ENCODE measurements at regions of chr6 and their contacts with region 1.

Region 1: DNA sequence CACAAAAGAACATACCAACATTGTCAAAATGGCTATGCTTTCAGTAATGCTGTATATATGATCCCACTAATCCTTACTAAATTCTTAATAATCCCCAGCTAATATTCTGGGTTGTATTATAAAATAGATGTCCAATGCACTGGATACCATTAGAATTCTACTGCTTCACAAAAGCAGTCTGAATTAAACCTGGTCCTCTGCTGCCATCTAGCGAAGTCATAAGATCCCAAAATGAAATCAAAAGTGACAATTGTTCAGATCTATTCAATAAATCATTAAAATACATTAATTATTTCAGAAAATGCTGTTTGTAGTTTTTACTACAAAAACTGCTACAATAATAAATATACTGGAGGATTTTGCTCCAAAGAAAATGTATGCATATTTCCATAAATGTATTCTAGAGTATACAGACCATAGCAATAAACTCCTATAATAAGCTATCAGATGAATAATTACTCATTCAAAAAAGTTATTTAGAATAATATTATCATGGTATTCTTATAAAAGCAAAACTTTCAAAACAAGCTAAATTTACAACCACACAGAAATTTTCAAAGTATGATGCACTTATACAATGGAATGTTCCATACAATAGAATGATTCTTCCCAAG is 92.6 kb downstream of the RNGTT start:
- DNase-seq: peak; percentile 29
- H3K4me3 ChIP-seq: no peak overlapping the region
- H3K27ac ChIP-seq: no peak overlapping the region
- H3K27me3 ChIP-seq: no peaks in the 10 kb centered on the region
- CTCF ChIP-seq: peak; percentile 63

Region 2: GRCh38 chr6:87393022-87393622 is 1477.7 kb before region 1 on chr6:
- CTCF ChIA-PET with region 1: interaction called, 13 read pairs
- POLR2A ChIA-PET with region 1: no interaction called
- DNase-seq: no peak
- H3K4me3 ChIP-seq: no peak overlapping the region
- H3K27ac ChIP-seq: no peak overlapping the region
- H3K27me3 ChIP-seq: no peaks in the 10 kb centered on the region
- CTCF ChIP-seq: peak; percentile 73

Region 3: GRCh38 chr6:87929843-87930288 is 941.0 kb before region 1 on chr6:
- CTCF ChIA-PET with region 1: interaction called, 129 read pairs
- POLR2A ChIA-PET with region 1: no interaction called
- DNase-seq: peak; percentile 53
- H3K4me3 ChIP-seq: no peak overlapping the region
- H3K27ac ChIP-seq: no peak overlapping the region
- H3K27me3 ChIP-seq: peaks cover 4% of the 10 kb centered on the region
- CTCF ChIP-seq: peak; percentile 93

Region 4: GRCh38 chr6:88670369-88670768 is 200.5 kb before region 1 on chr6:
- CTCF ChIA-PET with region 1: no interaction called
- POLR2A ChIA-PET with region 1: no interaction called
- DNase-seq: no peak
- H3K4me3 ChIP-seq: no peak overlapping the region
- H3K27ac ChIP-seq: no peak overlapping the region
- H3K27me3 ChIP-seq: no peaks in the 10 kb centered on the region
- CTCF ChIP-seq: no peak

Region 5: GRCh38 chr6:88725111-88725975 is 145.5 kb before region 1 on chr6:
- CTCF ChIA-PET with region 1: no interaction called
- POLR2A ChIA-PET with region 1: no interaction called
- DNase-seq: peak; percentile 43
- H3K4me3 ChIP-seq: no peak overlapping the region; the same call in 1 of the 2 replicates
- H3K27ac ChIP-seq: peak overlapping the region; percentile 59
- H3K27me3 ChIP-seq: no peaks in the 10 kb centered on the region
- CTCF ChIP-seq: peak; percentile 47

Region 6: DNA sequence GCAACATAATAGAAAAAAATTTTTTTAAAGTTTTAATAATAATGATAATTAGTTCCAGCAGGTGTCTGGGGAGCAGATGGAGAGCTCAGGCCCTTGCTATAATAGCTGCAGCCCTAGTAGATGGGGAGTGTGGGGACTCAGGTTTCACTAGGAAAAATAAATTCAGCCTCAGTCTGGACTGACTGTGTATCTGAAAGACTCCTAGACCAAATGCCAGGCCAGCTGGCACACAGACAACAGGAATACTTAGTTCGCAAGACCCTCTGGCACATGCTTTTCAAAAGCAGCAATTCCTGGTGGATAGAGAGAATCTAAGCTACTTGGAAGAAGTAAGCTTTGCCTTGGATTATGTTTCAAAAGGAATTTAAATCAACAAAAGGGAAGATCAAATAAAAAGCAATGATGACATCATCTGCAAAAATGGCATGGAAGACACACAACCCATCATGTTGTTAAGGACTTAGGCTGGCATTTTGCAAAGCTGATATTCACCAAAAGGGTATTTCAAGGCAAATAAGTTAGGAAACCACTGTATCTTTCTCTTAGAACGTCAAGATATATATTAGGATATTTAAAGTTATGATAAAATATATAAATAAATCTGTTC is 15.2 kb before region 1 on chr6:
- CTCF ChIA-PET with region 1: interaction called, 20 read pairs
- POLR2A ChIA-PET with region 1: interaction called, 6 read pairs
- DNase-seq: no peak
- H3K4me3 ChIP-seq: no peak overlapping the region
- H3K27ac ChIP-seq: no peak overlapping the region
- H3K27me3 ChIP-seq: no peaks in the 10 kb centered on the region
- CTCF ChIP-seq: no peak

Region 7: GRCh38 chr6:88963139-88964090 is 92.6 kb after region 1 on chr6 and contains the start of gene RNGTT:
- CTCF ChIA-PET with region 1: no interaction called
- POLR2A ChIA-PET with region 1: no interaction called
- DNase-seq: peak; percentile 90
- H3K4me3 ChIP-seq: peak within 1 kb of the TSS; percentile 99
- H3K27ac ChIP-seq: peak within 1 kb of the TSS; percentile 68
- H3K27me3 ChIP-seq: no peaks in the 10 kb centered on the region
- CTCF ChIP-seq: no peak
- polyA plus RNA-seq, gene RNGTT: 7.8 and 11.2 TPM in 2 replicates

Region 8: GRCh38 chr6:89371849-89372505 is 501.2 kb after region 1 on chr6:
- CTCF ChIA-PET with region 1: no interaction called
- POLR2A ChIA-PET with region 1: no interaction called
- DNase-seq: peak; percentile 6
- H3K4me3 ChIP-seq: no peak overlapping the region
- H3K27ac ChIP-seq: no peak overlapping the region
- H3K27me3 ChIP-seq: peaks cover 10% of the 10 kb centered on the region
- CTCF ChIP-seq: peak; percentile 93

Measured in AG04450 (cell line).